ENCODE measurements at regions of chr11 and their contacts with region 1.

Region 1: DNA sequence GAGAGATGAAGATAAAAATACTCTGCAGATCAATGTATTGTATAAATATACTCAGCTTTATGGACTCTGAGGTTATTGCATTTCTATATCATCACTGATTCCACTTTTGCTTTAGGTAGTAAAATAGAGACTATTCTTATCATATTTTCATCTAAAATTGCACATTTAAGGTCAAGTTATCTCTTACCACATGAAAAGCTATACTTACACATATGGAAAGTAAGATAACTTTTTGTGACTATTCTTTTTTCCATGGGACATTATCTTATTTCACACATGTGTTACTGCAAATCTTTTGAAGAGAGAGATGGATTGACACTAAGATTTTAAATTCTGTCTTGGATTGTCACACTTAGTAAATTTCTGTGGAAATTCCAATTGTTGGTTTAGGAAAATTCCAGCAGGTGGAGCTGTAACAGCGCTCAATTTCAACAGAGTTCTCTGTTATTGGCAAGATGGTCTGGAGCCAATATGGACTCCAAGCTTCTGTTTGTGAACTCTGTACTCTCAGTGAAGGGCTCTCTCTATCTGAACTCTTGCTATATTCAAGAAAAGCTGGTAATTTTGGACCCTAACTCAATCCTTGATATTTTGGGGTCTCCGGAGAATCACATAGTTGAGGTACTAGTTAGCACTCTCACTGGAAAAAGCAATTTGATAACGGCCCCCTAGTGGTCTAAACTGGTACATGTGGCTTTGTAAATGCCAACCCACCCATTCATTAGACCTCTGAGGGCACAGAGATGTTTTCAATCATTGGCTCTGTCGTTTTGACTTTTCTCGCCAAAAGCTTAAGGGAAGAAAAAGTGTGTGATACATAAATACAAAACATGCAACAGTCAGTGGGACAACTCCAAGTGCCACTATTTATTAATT is 429.7 kb downstream of the ETS1 start:
- DNase-seq: peak in 8 of 9 donors; percentile 44 to 82 (median 74)
- ATAC-seq: peak; percentile 96
- H3K4me3 ChIP-seq: peak overlapping the region; percentile 33
- H3K4me3 Mint-ChIP-seq: peak overlapping the region in 9 of 10 donors; percentile 64 to 87 (median 77)
- H3K27ac ChIP-seq: peak overlapping the region; percentile 4
- H3K27ac Mint-ChIP-seq: peak overlapping the region in 7 of 9 donors; percentile 4 to 86 (median 58)
- H3K4me1 ChIP-seq: no peaks in the 10 kb centered on the region
- H3K4me1 Mint-ChIP-seq: peaks cover 0 to 10% (median 4%) of the 10 kb centered on the region in 7 donors
- H3K27me3 ChIP-seq: no peaks in the 10 kb centered on the region
- H3K27me3 Mint-ChIP-seq: peaks cover 0 to 28% (median 0%) of the 10 kb centered on the region in 5 donors

Region 2: GRCh38 chr11:128052912-128053641 is 104.6 kb before region 1 on chr11:
- CTCF ChIA-PET with region 1: interaction called, 21 read pairs
- POLR2A ChIA-PET with region 1: interaction called, 3 read pairs
- intact Hi-C with region 1: no loop called
- DNase-seq: peak in 7 of 9 donors; percentile 21 to 66 (median 61)
- ATAC-seq: peak; percentile 60
- H3K4me3 ChIP-seq: peak overlapping the region; percentile 28
- H3K4me3 Mint-ChIP-seq: peak overlapping the region; percentile 54 to 90 (median 80)
- H3K27ac ChIP-seq: peak overlapping the region; percentile 68
- H3K27ac Mint-ChIP-seq: peak overlapping the region; percentile 82 to 95 (median 90)
- H3K4me1 ChIP-seq: peaks cover 63 to 64% of the 10 kb centered on the region in 2 donors
- H3K4me1 Mint-ChIP-seq: peaks cover 40 to 81% (median 78%) of the 10 kb centered on the region in 7 donors
- H3K27me3 ChIP-seq: no peaks in the 10 kb centered on the region
- H3K27me3 Mint-ChIP-seq: no peaks in the 10 kb centered on the region

Region 3: DNA sequence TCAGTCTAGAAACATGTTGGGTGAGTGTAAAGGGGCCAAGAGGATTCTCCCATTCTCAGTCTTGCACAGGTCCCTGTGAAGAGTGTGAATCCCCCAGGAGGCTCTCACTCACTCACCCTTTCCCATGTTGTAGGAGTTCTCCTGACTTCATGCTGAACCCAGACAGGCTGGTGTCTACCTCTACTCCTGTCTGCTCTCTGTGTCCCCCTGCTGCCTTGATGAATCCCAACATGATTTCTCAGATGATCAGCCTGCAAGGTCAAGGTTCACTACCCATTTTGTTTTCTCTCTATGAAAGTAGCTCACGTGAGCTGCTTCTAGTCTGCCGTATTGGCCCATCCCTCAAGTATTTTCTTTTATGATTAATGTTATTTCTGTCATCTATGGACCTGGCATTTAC is 70.9 kb before region 1 on chr11:
- CTCF ChIA-PET with region 1: interaction called, 6 read pairs
- POLR2A ChIA-PET with region 1: interaction called, 3 read pairs
- intact Hi-C with region 1: loop called in 1 of 2 experiments (anchors 5 kb)
- DNase-seq: peak in 5 of 9 donors; percentile 16 to 38 (median 24)
- ATAC-seq: peak; percentile 40
- H3K4me3 ChIP-seq: no peak overlapping the region
- H3K4me3 Mint-ChIP-seq: peak overlapping the region in 6 of 10 donors; percentile 2 to 55 (median 25)
- H3K27ac ChIP-seq: no peak overlapping the region
- H3K27ac Mint-ChIP-seq: peak overlapping the region in 8 of 9 donors; percentile 2 to 76 (median 58)
- H3K4me1 ChIP-seq: peaks cover 18 to 30% of the 10 kb centered on the region in 2 donors
- H3K4me1 Mint-ChIP-seq: peaks cover 0 to 52% (median 41%) of the 10 kb centered on the region in 7 donors
- H3K27me3 ChIP-seq: no peaks in the 10 kb centered on the region
- H3K27me3 Mint-ChIP-seq: peaks cover 0 to 5% (median 0%) of the 10 kb centered on the region in 5 donors

Region 4: GRCh38 chr11:128172046-128172878 is 14.6 kb after region 1 on chr11:
- CTCF ChIA-PET with region 1: interaction called, 29 read pairs
- POLR2A ChIA-PET with region 1: interaction called, 3 read pairs
- intact Hi-C with region 1: no loop called
- DNase-seq: peak; percentile 59 to 82 (median 75)
- ATAC-seq: peak; percentile 85
- H3K4me3 ChIP-seq: no peak overlapping the region
- H3K4me3 Mint-ChIP-seq: no peak overlapping the region
- H3K27ac ChIP-seq: no peak overlapping the region
- H3K27ac Mint-ChIP-seq: peak overlapping the region in 2 of 9 donors; percentile 27 to 70
- H3K4me1 ChIP-seq: no peaks in the 10 kb centered on the region
- H3K4me1 Mint-ChIP-seq: peaks cover 0 to 9% (median 4%) of the 10 kb centered on the region in 7 donors
- H3K27me3 ChIP-seq: no peaks in the 10 kb centered on the region
- H3K27me3 Mint-ChIP-seq: peaks cover 0 to 15% (median 0%) of the 10 kb centered on the region in 5 donors

Region 5: GRCh38 chr11:128905345-128906184 is 747.9 kb after region 1 on chr11:
- CTCF ChIA-PET with region 1: interaction called, 4 read pairs
- POLR2A ChIA-PET with region 1: no interaction called
- intact Hi-C with region 1: loop called in 1 of 2 experiments (anchors 5 kb)
- DNase-seq: peak in 7 of 9 donors; percentile 27 to 51 (median 46)
- ATAC-seq: peak; percentile 73
- H3K4me3 ChIP-seq: peak overlapping the region; percentile 62
- H3K4me3 Mint-ChIP-seq: peak overlapping the region; percentile 79 to 89 (median 82)
- H3K27ac ChIP-seq: no peak overlapping the region
- H3K27ac Mint-ChIP-seq: peak overlapping the region in 2 of 9 donors; percentile 13 to 59
- H3K4me1 ChIP-seq: peaks cover 0 to 3% of the 10 kb centered on the region in 2 donors
- H3K4me1 Mint-ChIP-seq: peaks cover 7 to 24% (median 11%) of the 10 kb centered on the region in 7 donors
- H3K27me3 ChIP-seq: peaks cover 4 to 5% of the 10 kb centered on the region in 2 donors
- H3K27me3 Mint-ChIP-seq: peaks cover 8 to 88% (median 29%) of the 10 kb centered on the region in 5 donors

Measured in naive thymus-derived CD4-positive, alpha-beta T cell (primary cell).